Colonic mucosa (tissue), 4 donors: ENCODE measurements at regions of chr9 and their contacts with region 1.

Region 1: DNA sequence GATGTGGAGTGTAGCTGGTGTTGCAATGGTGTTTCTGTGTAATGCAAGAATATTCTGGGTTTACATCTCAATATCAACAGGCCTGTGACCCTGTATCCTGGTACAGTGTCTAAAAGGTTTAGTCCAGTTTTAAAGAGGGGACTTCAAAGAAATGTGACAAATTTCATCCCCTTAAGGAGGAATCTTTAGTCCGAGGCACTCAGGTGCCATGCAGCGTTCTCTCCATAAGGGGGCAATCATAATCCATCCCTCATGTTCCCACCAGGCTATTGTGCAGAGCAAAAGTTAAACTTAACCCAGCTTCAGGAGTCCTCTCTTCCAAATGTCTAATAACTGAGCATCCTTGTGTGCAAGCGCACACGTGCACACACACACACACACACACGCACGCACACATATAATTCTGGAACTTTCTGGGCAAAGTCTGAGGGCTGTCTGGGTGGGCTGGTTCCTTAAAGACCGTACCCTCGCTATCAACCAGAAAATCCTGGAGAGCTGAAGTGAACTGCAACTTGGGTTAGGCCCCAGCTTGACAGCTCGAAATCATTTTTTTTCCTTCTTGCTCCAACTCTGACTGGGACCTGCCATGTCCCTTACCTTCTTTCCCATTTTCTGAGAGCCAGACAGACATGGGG is 46.0 kb downstream of the CRB2 start:
- DNase-seq: peak; percentile 50
- H3K4me3 ChIP-seq: no peak overlapping the region
- H3K27ac ChIP-seq: no peak overlapping the region
- H3K4me1 ChIP-seq: no peaks in the 10 kb centered on the region
- H3K27me3 ChIP-seq: no peaks in the 10 kb centered on the region
- CTCF ChIP-seq: peak; percentile 63

Region 2: GRCh38 chr9:123511326-123512277 is 109.6 kb after region 1 on chr9:
- intact Hi-C with region 1: loop called (anchors 10 kb)
- DNase-seq: no peak
- H3K4me3 ChIP-seq: no peak overlapping the region
- H3K27ac ChIP-seq: no peak overlapping the region
- H3K4me1 ChIP-seq: no peaks in the 10 kb centered on the region
- H3K27me3 ChIP-seq: no peaks in the 10 kb centered on the region
- CTCF ChIP-seq: no peak